CD4-positive, alpha-beta memory T cell (primary cell): ENCODE measurements at regions of chr19 and their contacts with region 1.

Region 1: DNA sequence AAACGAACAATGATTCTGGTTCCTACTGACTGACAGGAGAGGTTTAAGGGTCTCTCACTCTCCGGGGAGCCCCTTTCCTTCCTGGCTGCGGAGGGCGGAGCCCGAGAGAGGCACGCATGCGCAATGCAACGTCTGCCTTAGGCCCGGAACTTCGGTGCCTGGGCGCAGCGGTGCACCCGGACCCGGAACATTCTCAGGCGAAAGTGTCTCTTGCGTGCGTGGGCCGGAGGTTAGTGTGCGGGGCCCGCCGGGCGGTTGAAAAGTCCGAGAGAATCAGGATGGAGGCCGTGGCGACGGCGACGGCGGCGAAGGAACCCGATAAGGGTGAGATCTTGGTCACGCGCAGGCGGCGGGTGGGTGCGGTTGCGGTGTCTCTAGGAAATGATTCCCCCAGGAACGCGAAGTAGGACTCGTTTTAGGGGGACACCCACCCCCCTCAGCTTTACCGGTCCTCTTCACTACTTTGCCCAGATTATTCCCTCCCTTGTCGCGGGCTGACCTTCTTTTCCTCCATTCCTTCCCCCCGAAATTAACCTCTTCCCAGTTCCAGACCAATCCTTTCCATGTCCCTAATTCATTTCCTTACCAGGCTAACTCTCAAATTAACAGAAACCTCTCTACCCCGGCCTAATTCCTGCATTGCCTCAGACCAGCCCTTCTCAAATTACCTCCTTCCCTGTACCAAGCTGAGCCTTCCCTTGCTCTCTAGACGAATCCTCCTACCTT is at the start of gene CCDC97:
- DNase-seq: peak; percentile 86 to 92 (median 89)
- H3K4me3 ChIP-seq: peak within 1 kb of the TSS; percentile 82 to 98
- H3K4me3 Mint-ChIP-seq: peak within 1 kb of the TSS; percentile 96 to 100 (median 97)
- H3K27ac ChIP-seq: peak within 1 kb of the TSS; percentile 92
- H3K27ac Mint-ChIP-seq: peak within 1 kb of the TSS; percentile 97 to 100 (median 99)
- H3K4me1 ChIP-seq: peaks cover 76% of the 10 kb centered on the region
- H3K4me1 Mint-ChIP-seq: peaks cover 43 to 87% (median 68%) of the 10 kb centered on the region in 4 donors
- H3K27me3 ChIP-seq: no peaks in the 10 kb centered on the region
- H3K27me3 Mint-ChIP-seq: no peaks in the 10 kb centered on the region
- total RNA-seq, gene CCDC97: 56.4 to 61.4 TPM

Region 2: DNA sequence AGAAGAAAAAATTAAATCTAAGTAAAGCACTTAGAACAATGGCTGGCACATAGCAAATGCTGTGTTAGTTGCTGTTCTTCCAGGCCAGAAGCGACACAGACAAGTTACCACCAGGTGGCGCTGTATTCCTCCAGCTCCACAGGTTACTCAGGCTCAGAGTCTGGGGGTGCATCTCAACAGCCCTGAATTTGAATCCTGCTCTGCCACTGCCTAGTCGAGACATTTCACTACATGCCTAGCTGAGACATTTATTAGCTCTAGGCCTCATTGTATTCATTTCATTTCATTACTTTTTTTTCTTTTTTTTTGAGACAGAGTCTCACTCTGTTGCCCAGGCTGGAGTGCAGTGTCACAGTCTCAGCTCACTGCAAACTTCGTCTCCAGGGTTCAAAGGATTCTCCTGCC is 335.6 kb before region 1 on chr19:
- CTCF ChIA-PET with region 1: interaction called, 6 read pairs
- POLR2A ChIA-PET with region 1: interaction called, 8 read pairs
- intact Hi-C with region 1: loop called (anchors 1 kb)
- DNase-seq: peak; percentile 72 to 79 (median 73)
- H3K4me3 ChIP-seq: no peak overlapping the region
- H3K4me3 Mint-ChIP-seq: no peak overlapping the region
- H3K27ac ChIP-seq: no peak overlapping the region
- H3K27ac Mint-ChIP-seq: peak overlapping the region in 1 of 7 donors; percentile 9
- H3K4me1 ChIP-seq: peaks cover 22% of the 10 kb centered on the region
- H3K4me1 Mint-ChIP-seq: peaks cover 22 to 31% (median 26%) of the 10 kb centered on the region in 4 donors
- H3K27me3 ChIP-seq: no peaks in the 10 kb centered on the region
- H3K27me3 Mint-ChIP-seq: peaks cover 5 to 7% of the 10 kb centered on the region in 2 donors

Region 3: GRCh38 chr19:41144403-41144802 is 165.8 kb before region 1 on chr19:
- CTCF ChIA-PET with region 1: interaction called, 4 read pairs
- POLR2A ChIA-PET with region 1: no interaction called
- intact Hi-C with region 1: loop called (anchors 5 kb)
- DNase-seq: peak; percentile 85 to 88 (median 86)
- H3K4me3 ChIP-seq: no peak overlapping the region
- H3K4me3 Mint-ChIP-seq: no peak overlapping the region
- H3K27ac ChIP-seq: no peak overlapping the region
- H3K27ac Mint-ChIP-seq: peak overlapping the region in 5 of 7 donors; percentile 39 to 84 (median 81)
- H3K4me1 ChIP-seq: no peaks in the 10 kb centered on the region
- H3K4me1 Mint-ChIP-seq: peaks cover 0 to 2% (median under 1%) of the 10 kb centered on the region in 4 donors
- H3K27me3 ChIP-seq: no peaks in the 10 kb centered on the region
- H3K27me3 Mint-ChIP-seq: peaks cover 6 to 11% of the 10 kb centered on the region in 2 donors

Region 4: DNA sequence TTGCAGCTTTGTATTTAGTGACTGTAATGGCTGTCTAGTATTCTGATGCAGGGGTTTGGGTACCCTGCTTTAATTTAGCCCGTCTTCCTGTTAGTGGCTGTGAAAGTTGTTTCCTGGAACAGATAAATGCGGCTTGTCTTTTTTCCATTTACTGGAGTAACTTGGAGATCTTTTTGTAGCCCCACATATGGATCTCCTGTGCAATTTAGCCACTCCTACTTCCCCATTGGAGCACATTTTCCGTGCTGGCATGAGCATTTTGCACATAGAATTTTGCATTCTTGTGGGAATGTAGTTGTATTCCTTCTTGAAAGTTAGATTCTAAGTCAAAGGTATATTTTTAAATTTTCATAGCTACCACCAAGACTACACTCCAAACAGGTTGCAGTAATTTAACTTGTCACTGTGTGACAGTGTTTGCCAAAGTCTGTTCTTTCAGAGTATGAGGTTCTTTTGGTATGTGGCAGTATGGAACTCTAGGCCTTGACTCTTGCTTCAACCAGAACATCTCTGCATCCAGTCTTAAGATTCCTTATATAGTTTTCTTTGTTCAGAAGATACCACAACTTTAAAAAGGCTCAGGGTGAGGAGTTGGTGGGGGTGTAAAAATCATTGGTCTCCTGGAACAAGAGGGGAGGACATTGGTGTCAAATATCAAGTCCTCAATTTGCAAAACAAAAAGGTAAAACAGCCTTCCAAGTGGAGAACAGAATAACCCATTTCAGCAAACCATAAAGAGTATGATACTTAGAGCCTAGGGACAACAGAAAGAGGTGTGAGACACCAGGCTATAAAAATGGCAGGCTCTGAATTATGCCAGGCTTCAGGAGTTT is 21.3 kb before region 1 on chr19:
- CTCF ChIA-PET with region 1: interaction called, 54 read pairs
- POLR2A ChIA-PET with region 1: interaction called, 10 read pairs
- intact Hi-C with region 1: loop called (anchors 2 kb)
- DNase-seq: no peak
- H3K4me3 ChIP-seq: no peak overlapping the region
- H3K4me3 Mint-ChIP-seq: peak overlapping the region in 1 of 8 donors; percentile 10
- H3K27ac ChIP-seq: no peak overlapping the region
- H3K27ac Mint-ChIP-seq: peak overlapping the region; percentile 42 to 84 (median 68)
- H3K4me1 ChIP-seq: peaks cover 7% of the 10 kb centered on the region
- H3K4me1 Mint-ChIP-seq: peaks cover 2 to 20% (median 10%) of the 10 kb centered on the region in 4 donors
- H3K27me3 ChIP-seq: no peaks in the 10 kb centered on the region
- H3K27me3 Mint-ChIP-seq: no peaks in the 10 kb centered on the region

Region 5: DNA sequence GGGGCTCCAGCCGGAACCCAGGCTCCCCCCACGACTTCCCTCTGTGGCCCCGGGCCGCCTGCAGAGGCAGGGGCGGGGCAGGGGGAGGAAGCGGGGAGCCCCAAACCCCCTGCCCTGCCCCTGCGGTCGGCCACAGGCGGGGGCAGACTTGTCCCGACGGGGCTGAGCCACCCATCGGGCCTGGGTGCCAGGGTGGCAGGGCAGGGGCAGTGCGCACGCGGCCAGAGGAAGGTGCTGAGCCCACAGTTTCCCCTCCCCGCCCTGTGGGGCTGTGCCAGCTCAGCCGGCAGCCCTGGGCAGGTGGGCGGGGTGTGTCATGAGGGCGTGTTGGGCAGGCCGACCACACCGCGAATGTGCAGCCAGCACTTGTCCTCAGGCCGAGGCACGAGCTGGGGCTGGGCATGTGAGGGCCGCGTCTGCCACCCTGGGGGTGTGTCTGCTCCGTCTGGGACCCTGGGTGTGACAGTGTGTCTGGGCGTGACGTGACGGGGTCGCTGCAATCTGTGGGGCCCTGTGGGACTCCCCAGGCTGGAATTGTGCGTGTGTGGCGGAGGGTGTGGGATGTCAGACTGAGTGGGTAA is 17.5 kb after region 1 on chr19:
- CTCF ChIA-PET with region 1: interaction called, 8 read pairs
- POLR2A ChIA-PET with region 1: interaction called, 65 read pairs
- intact Hi-C with region 1: loop called (anchors 2 kb)
- DNase-seq: peak; percentile 81 to 99 (median 84)
- H3K4me3 ChIP-seq: peak overlapping the region in 1 of 2 donors; percentile 43
- H3K4me3 Mint-ChIP-seq: peak overlapping the region; percentile 77 to 87 (median 84)
- H3K27ac ChIP-seq: peak overlapping the region; percentile 76
- H3K27ac Mint-ChIP-seq: peak overlapping the region; percentile 97 to 99 (median 98)
- H3K4me1 ChIP-seq: peaks cover 69% of the 10 kb centered on the region
- H3K4me1 Mint-ChIP-seq: peaks cover 45 to 81% (median 62%) of the 10 kb centered on the region in 4 donors
- H3K27me3 ChIP-seq: no peaks in the 10 kb centered on the region
- H3K27me3 Mint-ChIP-seq: no peaks in the 10 kb centered on the region

Region 6: DNA sequence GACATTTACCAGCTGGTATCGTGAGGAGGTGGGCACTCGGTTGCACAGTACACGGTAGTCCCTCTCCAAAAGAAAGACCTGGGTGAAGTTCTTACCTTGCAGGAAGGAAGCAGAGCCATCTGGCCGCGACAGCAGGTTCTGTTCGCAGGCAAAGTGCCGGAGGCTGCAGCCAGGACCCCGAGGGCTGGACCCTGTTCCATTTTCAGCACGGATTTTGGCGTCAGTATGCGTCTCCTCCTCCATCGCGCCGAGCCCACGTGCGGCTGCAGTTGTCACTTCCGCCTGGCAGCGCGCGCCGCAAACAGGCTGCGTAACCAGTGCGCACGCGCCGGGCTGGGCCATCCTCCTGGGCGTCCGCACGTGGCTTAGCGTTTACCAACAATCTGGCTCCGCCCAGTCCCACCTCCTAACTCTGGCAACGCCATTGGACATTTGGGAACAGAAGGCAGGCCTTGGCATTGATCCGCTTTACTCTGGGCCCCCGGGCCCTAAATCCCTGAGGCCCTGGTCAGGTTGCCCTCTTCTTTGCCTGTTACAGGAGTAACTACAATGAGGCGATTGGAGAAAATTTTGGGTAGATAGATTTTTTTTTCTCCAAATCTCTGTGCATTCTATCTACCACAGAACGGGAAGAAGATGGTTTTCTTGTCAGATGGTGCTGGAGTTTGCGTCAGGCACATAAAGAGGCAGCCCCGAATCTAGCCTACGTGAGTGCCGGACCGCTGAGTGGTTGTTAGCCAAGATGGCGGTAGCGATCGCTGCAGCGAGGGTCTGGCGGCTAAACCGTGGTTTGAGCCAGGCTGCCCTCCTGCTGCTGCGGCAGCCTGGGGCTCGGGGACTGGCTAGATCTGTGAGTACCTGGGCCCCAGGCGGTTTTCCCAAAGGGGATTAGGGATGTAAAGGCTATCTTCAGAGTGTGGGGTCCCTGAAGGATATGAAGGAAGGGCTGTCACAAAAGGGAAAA is 87.2 kb after region 1 on chr19 and contains the starts of genes BCKDHA and EXOSC5:
- CTCF ChIA-PET with region 1: no interaction called
- POLR2A ChIA-PET with region 1: no interaction called
- intact Hi-C with region 1: loop called (anchors 1 kb)
- DNase-seq: peak; percentile 98 to 100 (median 100)
- H3K4me3 ChIP-seq: peak within 1 kb of the TSS; percentile 94 to 96
- H3K4me3 Mint-ChIP-seq: peak within 1 kb of the TSS; percentile 94 to 100 (median 98)
- H3K27ac ChIP-seq: peak within 1 kb of the TSS; percentile 93
- H3K27ac Mint-ChIP-seq: peak within 1 kb of the TSS; percentile 98 to 100 (median 100)
- H3K4me1 ChIP-seq: peaks cover 31% of the 10 kb centered on the region
- H3K4me1 Mint-ChIP-seq: peaks cover 27 to 54% (median 41%) of the 10 kb centered on the region in 4 donors
- H3K27me3 ChIP-seq: no peaks in the 10 kb centered on the region
- H3K27me3 Mint-ChIP-seq: no peaks in the 10 kb centered on the region
- total RNA-seq, gene BCKDHA: 23.6 to 27.1 TPM
- total RNA-seq, gene EXOSC5: 18.2 to 23.0 TPM